ENCODE measurements at regions of chr14 and their contacts with region 1.

Region 1: DNA sequence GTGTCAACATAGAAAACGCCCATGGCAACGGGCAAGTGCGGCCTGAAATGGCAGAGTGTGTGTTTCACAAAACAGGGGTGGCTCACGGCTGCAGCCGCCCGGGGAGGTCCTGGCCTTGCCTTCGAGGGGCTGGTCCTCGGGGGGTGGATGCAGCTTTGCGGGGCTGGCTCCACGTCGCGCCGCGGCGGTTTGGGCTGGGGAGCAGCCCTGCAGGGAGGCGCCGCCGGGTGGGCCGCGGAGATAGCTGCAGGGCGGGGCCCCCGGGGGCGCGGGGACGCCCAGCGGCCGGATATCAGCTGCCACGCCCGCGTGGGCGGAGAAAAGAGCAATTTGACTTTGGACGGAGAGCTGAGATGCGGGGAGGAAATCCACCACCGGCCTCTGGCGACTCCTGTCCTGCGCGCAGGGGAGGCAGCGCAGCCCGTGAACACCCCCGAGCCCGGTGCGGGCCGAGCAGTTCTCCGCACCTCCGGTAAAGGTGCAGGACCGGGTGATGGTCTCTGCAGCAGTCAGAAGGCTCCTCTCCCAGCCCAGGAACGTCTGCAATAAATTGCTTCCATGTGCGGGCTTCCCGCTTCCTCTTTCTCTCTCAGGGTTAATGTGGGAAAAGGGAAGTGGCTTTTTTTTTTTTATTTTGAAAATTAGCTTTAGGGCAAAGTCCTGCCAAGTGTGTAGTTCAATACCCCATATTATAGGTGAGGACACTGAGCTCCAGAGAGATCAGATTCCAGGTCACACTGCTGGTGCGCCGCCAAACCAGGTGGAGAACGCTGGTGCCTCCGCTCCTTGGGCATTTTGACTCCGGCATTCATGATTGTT is 110.5 kb downstream of the ARF6 start:
- DNase-seq: peak; percentile 91
- ATAC-seq: peak; percentile 62
- H3K4me3 ChIP-seq: peak overlapping the region; percentile 21 to 69 (median 59)
- H3K4me3 Mint-ChIP-seq: peak overlapping the region; percentile 91
- H3K27ac ChIP-seq: peak overlapping the region; percentile 98 to 99
- H3K27ac Mint-ChIP-seq: peak overlapping the region; percentile 96
- H3K4me1 ChIP-seq: peaks cover 70 to 75% of the 10 kb centered on the region in 2 donors
- H3K4me1 Mint-ChIP-seq: peaks cover 79% of the 10 kb centered on the region
- H3K27me3 ChIP-seq: no peaks in the 10 kb centered on the region
- H3K27me3 Mint-ChIP-seq: no peaks in the 10 kb centered on the region
- CTCF ChIP-seq: peak; percentile 44

Region 2: GRCh38 chr14:49879683-49880204 is 123.7 kb before region 1 on chr14:
- CTCF ChIA-PET with region 1: interaction called, 12 read pairs
- POLR2A ChIA-PET with region 1: interaction called, 4 read pairs
- intact Hi-C with region 1: no loop called
- DNase-seq: peak; percentile 69
- ATAC-seq: peak; percentile 85
- H3K4me3 ChIP-seq: no peak overlapping the region
- H3K4me3 Mint-ChIP-seq: no peak overlapping the region
- H3K27ac ChIP-seq: peak overlapping the region in 1 of 2 donors; percentile 59
- H3K27ac Mint-ChIP-seq: peak overlapping the region; percentile 72
- H3K4me1 ChIP-seq: peaks cover 12 to 16% of the 10 kb centered on the region in 2 donors
- H3K4me1 Mint-ChIP-seq: peaks cover 15% of the 10 kb centered on the region
- H3K27me3 ChIP-seq: no peaks in the 10 kb centered on the region
- H3K27me3 Mint-ChIP-seq: no peaks in the 10 kb centered on the region
- CTCF ChIP-seq: peak; percentile 58

Region 3: GRCh38 chr14:49934646-49935045 is 68.8 kb before region 1 on chr14:
- CTCF ChIA-PET with region 1: interaction called, 5 read pairs
- POLR2A ChIA-PET with region 1: interaction called, 6 read pairs
- intact Hi-C with region 1: loop called (anchors 2 kb)
- DNase-seq: no peak
- ATAC-seq: no peak
- H3K4me3 ChIP-seq: no peak overlapping the region
- H3K4me3 Mint-ChIP-seq: no peak overlapping the region
- H3K27ac ChIP-seq: no peak overlapping the region
- H3K27ac Mint-ChIP-seq: no peak overlapping the region
- H3K4me1 ChIP-seq: peaks cover 16 to 26% of the 10 kb centered on the region in 2 donors
- H3K4me1 Mint-ChIP-seq: peaks cover 33% of the 10 kb centered on the region
- H3K27me3 ChIP-seq: no peaks in the 10 kb centered on the region
- H3K27me3 Mint-ChIP-seq: no peaks in the 10 kb centered on the region
- CTCF ChIP-seq: no peak

Region 4: GRCh38 chr14:49971156-49972130 is 32.0 kb before region 1 on chr14:
- CTCF ChIA-PET with region 1: interaction called, 51 read pairs
- POLR2A ChIA-PET with region 1: interaction called, 45 read pairs
- intact Hi-C with region 1: loop called (anchors 1 kb)
- DNase-seq: peak; percentile 92
- ATAC-seq: peak; percentile 85
- H3K4me3 ChIP-seq: peak overlapping the region in 2 of 5 experiments; percentile 30 to 32
- H3K4me3 Mint-ChIP-seq: peak overlapping the region; percentile 55
- H3K27ac ChIP-seq: peak overlapping the region; percentile 98 to 99
- H3K27ac Mint-ChIP-seq: peak overlapping the region; percentile 97
- H3K4me1 ChIP-seq: peaks cover 57 to 70% of the 10 kb centered on the region in 2 donors
- H3K4me1 Mint-ChIP-seq: peaks cover 62% of the 10 kb centered on the region
- H3K27me3 ChIP-seq: no peaks in the 10 kb centered on the region
- H3K27me3 Mint-ChIP-seq: no peaks in the 10 kb centered on the region
- CTCF ChIP-seq: no peak

Region 5: DNA sequence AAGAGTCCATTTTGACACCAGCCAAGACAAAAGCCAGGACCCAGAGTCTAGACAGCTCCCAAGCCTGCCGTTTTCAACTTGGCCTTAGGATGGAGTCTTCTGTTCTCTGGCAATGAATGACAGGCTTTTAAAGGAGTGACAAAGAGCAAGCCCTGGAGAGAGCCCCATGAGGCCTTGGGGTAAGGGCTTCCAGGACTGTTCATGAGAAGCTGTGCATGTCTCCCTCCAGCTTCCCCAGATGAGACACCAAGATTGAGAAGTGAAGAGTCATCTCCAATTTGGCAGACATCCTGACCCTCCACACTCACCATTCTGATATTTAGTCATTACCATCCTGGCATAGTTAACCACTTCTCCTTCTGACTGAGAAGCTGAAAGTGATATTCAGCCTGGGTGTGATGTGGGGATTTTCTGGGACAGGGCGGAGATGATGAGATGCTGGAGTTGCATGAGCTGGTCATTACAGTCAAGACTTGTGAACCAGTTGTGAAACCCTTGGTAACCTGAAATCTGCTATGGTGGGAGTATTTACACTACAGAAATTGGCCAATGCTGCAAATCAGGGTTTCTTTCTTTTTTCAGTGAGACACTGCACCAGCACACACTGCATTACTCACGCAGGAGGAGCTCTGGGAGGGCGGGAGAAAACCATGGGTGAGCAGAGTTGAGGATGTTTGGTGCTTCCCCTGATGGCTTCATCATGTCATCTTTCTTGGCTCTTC is 35.1 kb after region 1 on chr14:
- CTCF ChIA-PET with region 1: interaction called, 14 read pairs
- POLR2A ChIA-PET with region 1: interaction called, 7 read pairs
- intact Hi-C with region 1: loop called (anchors 1 kb)
- DNase-seq: peak; percentile 50
- ATAC-seq: peak; percentile 47
- H3K4me3 ChIP-seq: no peak overlapping the region
- H3K4me3 Mint-ChIP-seq: peak overlapping the region; percentile 7
- H3K27ac ChIP-seq: peak overlapping the region in 1 of 2 donors; percentile 38
- H3K27ac Mint-ChIP-seq: peak overlapping the region; percentile 53
- H3K4me1 ChIP-seq: peaks cover 36 to 38% of the 10 kb centered on the region in 2 donors
- H3K4me1 Mint-ChIP-seq: peaks cover 45% of the 10 kb centered on the region
- H3K27me3 ChIP-seq: no peaks in the 10 kb centered on the region
- H3K27me3 Mint-ChIP-seq: no peaks in the 10 kb centered on the region
- CTCF ChIP-seq: no peak

Region 6: DNA sequence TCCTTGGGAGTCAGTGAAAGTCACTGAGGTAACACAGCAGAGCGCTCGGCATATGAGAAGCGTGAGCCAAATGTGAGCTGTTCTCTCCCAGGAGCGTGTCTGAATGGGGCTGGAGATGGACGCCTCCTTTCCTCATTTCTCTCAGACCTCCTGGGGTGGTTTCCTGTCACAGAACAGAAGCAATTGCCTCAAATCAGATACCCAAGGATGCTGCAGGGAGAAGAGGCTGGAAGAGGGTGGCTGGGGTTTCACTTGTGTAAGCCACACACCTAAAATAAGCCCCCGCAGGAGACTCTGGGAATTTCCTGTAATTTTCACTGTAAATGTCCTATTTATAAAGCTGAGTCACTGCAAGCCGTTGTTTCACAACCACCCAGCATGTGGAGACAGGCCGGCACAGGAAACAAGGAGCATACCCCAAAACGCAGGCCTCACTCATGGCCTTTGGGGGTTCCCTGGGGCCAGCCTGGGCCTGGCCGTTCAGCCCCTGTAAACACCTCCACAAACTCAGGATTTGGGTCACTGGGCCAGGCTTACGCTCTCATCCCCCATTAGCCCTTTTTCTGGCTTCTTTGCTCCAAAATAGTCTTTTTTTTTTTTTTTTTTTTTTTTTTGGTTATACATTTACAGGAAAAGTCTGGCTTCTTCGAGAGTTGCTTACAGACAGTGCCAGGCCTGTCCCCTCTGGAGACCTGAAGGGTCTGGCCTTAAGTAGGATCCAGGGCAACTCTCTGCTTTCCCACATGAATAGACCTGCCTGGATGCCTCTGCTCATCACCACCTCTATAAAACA is 57.6 kb after region 1 on chr14:
- CTCF ChIA-PET with region 1: interaction called, 26 read pairs
- POLR2A ChIA-PET with region 1: interaction called, 44 read pairs
- intact Hi-C with region 1: loop called (anchors 1 kb)
- DNase-seq: peak; percentile 34
- ATAC-seq: no peak
- H3K4me3 ChIP-seq: peak overlapping the region in 3 of 5 experiments; percentile 0 to 9 (median 2)
- H3K4me3 Mint-ChIP-seq: peak overlapping the region; percentile 95
- H3K27ac ChIP-seq: peak overlapping the region; percentile 92 to 96
- H3K27ac Mint-ChIP-seq: peak overlapping the region; percentile 100
- H3K4me1 ChIP-seq: peaks cover 60 to 82% of the 10 kb centered on the region in 2 donors
- H3K4me1 Mint-ChIP-seq: peaks cover 87% of the 10 kb centered on the region
- H3K27me3 ChIP-seq: no peaks in the 10 kb centered on the region
- H3K27me3 Mint-ChIP-seq: no peaks in the 10 kb centered on the region
- CTCF ChIP-seq: no peak

Region 7: DNA sequence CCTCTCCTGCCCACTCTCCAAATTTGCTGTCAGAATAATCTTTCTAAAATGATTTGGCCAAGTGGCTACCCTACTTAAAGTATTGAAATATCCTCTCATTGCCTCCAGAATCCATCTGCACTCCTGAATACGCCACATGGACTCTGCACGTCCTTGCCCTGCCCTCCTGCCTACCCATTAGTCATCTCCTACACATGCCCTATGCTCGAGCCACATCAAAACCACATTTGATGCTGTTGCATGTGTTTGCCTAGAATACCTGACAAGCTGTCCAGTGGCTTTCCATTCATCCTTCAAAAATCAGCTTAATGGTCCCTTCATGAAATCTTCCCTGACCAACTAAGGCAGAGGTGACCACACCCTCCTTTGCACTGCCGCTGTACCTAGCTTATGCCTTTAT is 95.9 kb after region 1 on chr14:
- CTCF ChIA-PET with region 1: interaction called, 17 read pairs
- POLR2A ChIA-PET with region 1: interaction called, 8 read pairs
- intact Hi-C with region 1: no loop called
- DNase-seq: no peak
- ATAC-seq: no peak
- H3K4me3 ChIP-seq: no peak overlapping the region
- H3K4me3 Mint-ChIP-seq: no peak overlapping the region
- H3K27ac ChIP-seq: no peak overlapping the region
- H3K27ac Mint-ChIP-seq: peak overlapping the region; percentile 28
- H3K4me1 ChIP-seq: peaks cover 42 to 63% of the 10 kb centered on the region in 2 donors
- H3K4me1 Mint-ChIP-seq: peaks cover 66% of the 10 kb centered on the region
- H3K27me3 ChIP-seq: no peaks in the 10 kb centered on the region
- H3K27me3 Mint-ChIP-seq: no peaks in the 10 kb centered on the region
- CTCF ChIP-seq: no peak